Activated CD4-positive, alpha-beta T cell treated with anti-CD3 and anti-CD28 coated beads, Interleukin-2, amount 10 ng/mL, durations not matched to agents 24 days and 14 days (primary cell): ENCODE measurements at regions of chr11 and their contacts with region 1.

Region 1: GRCh38 chr11:95150946-95151684 is 61.5 kb downstream of the ENDOD1 start:
- DNase-seq: peak; percentile 97
- H3K4me3 Mint-ChIP-seq: peak overlapping the region; percentile 88
- H3K27ac Mint-ChIP-seq: peak overlapping the region; percentile 91
- H3K4me1 Mint-ChIP-seq: peaks cover 50% of the 10 kb centered on the region
- H3K27me3 Mint-ChIP-seq: no peaks in the 10 kb centered on the region

Region 2: DNA sequence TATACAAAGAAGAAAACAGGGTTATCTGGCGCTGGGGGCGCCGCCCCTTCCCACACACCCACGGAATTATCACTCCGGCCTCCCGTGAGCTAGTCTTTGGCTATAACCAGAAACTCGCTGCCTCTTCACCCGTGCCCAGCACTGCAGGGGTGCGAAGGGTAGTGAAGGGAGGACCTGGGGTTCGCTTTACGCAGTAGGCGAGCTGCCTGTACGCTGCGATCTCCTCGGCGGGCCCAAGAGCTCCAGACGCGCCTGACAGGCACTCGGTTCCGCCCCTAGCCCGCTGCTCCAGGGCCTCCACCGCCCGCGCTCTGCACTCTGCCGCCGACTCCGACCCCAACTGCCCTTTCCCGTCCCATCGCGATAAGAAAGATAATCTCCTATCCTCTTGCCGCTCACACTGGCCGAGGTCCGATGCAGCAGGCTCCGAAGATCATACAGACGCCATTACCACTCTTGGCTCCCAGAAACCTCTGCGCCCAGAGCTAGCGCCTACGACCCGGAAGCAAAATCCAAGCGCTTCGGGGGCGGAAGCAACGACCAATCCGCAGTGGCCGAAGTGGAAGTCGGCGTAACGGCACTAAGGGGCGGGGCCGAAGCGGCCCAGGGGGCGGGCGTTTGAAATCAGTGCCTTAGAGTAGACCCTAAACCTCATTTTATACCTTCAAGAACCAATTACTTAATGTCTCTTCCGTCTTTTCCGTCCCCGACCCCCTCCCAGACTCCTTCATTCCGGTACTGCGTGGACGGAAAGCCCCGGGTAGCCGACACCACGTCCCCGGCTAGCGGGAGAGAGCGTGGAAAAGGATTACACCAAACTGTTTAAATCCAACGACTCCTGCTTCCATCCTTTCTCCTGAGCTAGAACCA is 177.8 kb before region 1 on chr11 and contains the starts of genes CWC15 and KDM4D:
- intact Hi-C with region 1: loop called (anchors 1 kb)
- DNase-seq: peak; percentile 98
- H3K4me3 Mint-ChIP-seq: peak within 1 kb of the TSS; percentile 94
- H3K27ac Mint-ChIP-seq: peak within 1 kb of the TSS; percentile 93
- H3K4me1 Mint-ChIP-seq: peaks cover 33% of the 10 kb centered on the region
- H3K27me3 Mint-ChIP-seq: no peaks in the 10 kb centered on the region
- total RNA-seq, gene CWC15: 87.6 and 96.2 TPM in 2 replicates
- total RNA-seq, gene KDM4D: 1.2 TPM in 2 replicates

Region 3: DNA sequence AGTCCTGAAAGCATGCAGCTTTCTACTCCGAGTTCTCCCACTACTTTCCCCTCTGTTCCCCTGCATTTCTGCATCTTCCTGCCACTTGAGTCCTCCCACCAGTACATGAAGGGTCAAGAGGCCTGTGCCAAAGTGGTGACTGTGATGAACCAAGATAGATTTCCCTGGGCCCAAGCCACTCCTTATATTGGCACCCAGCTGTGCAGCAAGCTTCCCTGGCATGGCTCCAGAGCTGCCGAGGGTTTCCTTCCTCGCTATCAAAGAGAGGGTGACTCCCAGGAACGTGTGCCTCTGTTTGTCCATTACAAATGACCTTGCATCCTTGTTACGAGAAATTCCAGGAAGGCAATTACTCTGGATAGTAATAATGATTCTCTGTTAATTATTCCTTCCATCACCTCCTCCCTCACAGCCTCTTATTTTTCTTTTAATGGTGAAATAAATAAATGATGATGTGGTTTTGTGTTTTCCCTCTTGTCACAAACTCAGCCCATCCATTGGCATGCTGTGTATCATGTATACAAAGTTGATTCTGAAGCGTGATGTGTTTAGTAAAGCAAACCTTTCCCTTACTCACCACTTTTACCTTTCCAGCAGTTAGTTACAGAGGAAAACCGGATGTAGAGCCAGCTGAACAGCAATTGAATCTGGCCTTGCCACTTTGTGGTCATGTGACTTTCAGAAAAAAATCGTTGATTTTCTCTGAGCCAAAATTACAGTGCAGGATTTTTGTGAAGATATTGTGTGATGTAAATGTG is 76.1 kb before region 1 on chr11:
- intact Hi-C with region 1: no loop called
- DNase-seq: no peak
- H3K4me3 Mint-ChIP-seq: no peak overlapping the region
- H3K27ac Mint-ChIP-seq: no peak overlapping the region
- H3K4me1 Mint-ChIP-seq: peaks cover 23% of the 10 kb centered on the region
- H3K27me3 Mint-ChIP-seq: no peaks in the 10 kb centered on the region

Region 4: GRCh38 chr11:95089620-95090542 is 61.2 kb before region 1 on chr11 and contains the start of gene ENDOD1:
- intact Hi-C with region 1: loop called (anchors 1 kb)
- DNase-seq: peak; percentile 96
- H3K4me3 Mint-ChIP-seq: peak within 1 kb of the TSS; percentile 91
- H3K27ac Mint-ChIP-seq: peak within 1 kb of the TSS; percentile 98
- H3K4me1 Mint-ChIP-seq: peaks cover 67% of the 10 kb centered on the region
- H3K27me3 Mint-ChIP-seq: no peaks in the 10 kb centered on the region
- total RNA-seq, gene ENDOD1: 34.1 and 34.3 TPM in 2 replicates

Region 5: GRCh38 chr11:95556342-95557163 is 405.4 kb after region 1 on chr11:
- intact Hi-C with region 1: loop called (anchors 1 kb)
- DNase-seq: peak; percentile 70
- H3K4me3 Mint-ChIP-seq: peak overlapping the region; percentile 66
- H3K27ac Mint-ChIP-seq: peak overlapping the region; percentile 87
- H3K4me1 Mint-ChIP-seq: peaks cover 42% of the 10 kb centered on the region
- H3K27me3 Mint-ChIP-seq: no peaks in the 10 kb centered on the region

Region 6: GRCh38 chr11:95764267-95764898 is 613.3 kb after region 1 on chr11:
- intact Hi-C with region 1: loop called (anchors 1 kb)
- DNase-seq: peak; percentile 66
- H3K4me3 Mint-ChIP-seq: no peak overlapping the region
- H3K27ac Mint-ChIP-seq: no peak overlapping the region
- H3K4me1 Mint-ChIP-seq: peaks cover 6% of the 10 kb centered on the region
- H3K27me3 Mint-ChIP-seq: peaks cover 2% of the 10 kb centered on the region

Region 7: GRCh38 chr11:96424693-96425092 is 1273.6 kb after region 1 on chr11:
- intact Hi-C with region 1: loop called (anchors 1 kb)
- DNase-seq: no peak
- H3K4me3 Mint-ChIP-seq: no peak overlapping the region
- H3K27ac Mint-ChIP-seq: no peak overlapping the region
- H3K4me1 Mint-ChIP-seq: peaks cover 9% of the 10 kb centered on the region
- H3K27me3 Mint-ChIP-seq: peaks cover 42% of the 10 kb centered on the region